ENCODE measurements at regions of chr17 and their contacts with region 1.

Region 1: GRCh38 chr17:9729034-9729650 is 62.2 kb downstream of the DHRS7C start:
- DNase-seq: peak; percentile 61
- H3K4me3 ChIP-seq: no peak overlapping the region
- H3K27ac ChIP-seq: no peak overlapping the region
- H3K4me1 ChIP-seq: no peaks in the 10 kb centered on the region; the same call in 1 of the 2 replicates
- H3K27me3 ChIP-seq: peaks cover 14% of the 10 kb centered on the region

Region 2: GRCh38 chr17:9676742-9677387 is 52.3 kb before region 1 on chr17:
- in situ Hi-C with region 1: no loop called
- DNase-seq: peak; percentile 70
- H3K4me3 ChIP-seq: no peak overlapping the region
- H3K27ac ChIP-seq: no peak overlapping the region
- H3K4me1 ChIP-seq: no peaks in the 10 kb centered on the region
- H3K27me3 ChIP-seq: no peaks in the 10 kb centered on the region

Region 3: GRCh38 chr17:9788597-9788996 is 59.5 kb after region 1 on chr17:
- in situ Hi-C with region 1: loop called (anchors 10 kb)
- DNase-seq: no peak
- H3K4me3 ChIP-seq: no peak overlapping the region
- H3K27ac ChIP-seq: no peak overlapping the region
- H3K4me1 ChIP-seq: no peaks in the 10 kb centered on the region
- H3K27me3 ChIP-seq: 0 out of 2 replicates have a peak, but pooled peaks cover 4% of the 10 kb centered on the region

Measured in GM23248 (cell line).